ENCODE measurements at regions of chr9 and their contacts with region 1.

Region 1: DNA sequence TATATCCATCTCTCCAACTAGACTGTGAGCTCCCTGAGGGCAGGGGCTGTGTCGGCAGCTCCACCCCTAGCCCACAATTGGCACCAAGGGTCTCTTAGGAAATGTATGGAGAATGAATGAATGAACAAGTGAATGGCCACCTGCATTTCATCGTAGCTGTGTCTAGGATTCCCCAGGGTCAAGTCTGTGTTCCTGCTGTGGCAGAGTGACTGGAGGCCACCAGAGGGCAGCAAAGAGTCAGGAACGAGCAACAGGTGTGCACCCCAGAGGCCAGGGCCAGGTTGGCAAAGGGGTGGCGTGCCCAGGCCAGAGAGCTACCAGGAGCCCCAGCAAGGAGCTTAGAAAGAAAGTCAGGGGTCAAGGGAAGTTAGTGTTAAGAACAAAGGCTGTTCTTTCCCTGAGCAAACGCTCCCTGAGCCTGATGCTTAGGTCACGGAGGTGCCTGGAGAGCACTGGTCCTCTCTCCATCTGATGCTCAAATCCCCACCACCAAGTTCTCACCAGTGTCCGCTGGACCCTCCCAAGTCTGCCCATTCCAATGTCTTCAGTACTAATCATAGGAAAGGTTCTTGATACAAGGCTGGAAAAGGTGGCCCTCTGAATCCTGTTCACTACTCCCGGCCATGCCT is 160.7 kb downstream of the PAX5 start:
- DNase-seq: peak; percentile 79
- ATAC-seq: peak; percentile 90
- H3K4me3 Mint-ChIP-seq: no peak overlapping the region
- H3K27ac Mint-ChIP-seq: no peak overlapping the region
- H3K4me1 Mint-ChIP-seq: no peaks in the 10 kb centered on the region
- H3K27me3 Mint-ChIP-seq: peaks cover 14% of the 10 kb centered on the region

Region 2: DNA sequence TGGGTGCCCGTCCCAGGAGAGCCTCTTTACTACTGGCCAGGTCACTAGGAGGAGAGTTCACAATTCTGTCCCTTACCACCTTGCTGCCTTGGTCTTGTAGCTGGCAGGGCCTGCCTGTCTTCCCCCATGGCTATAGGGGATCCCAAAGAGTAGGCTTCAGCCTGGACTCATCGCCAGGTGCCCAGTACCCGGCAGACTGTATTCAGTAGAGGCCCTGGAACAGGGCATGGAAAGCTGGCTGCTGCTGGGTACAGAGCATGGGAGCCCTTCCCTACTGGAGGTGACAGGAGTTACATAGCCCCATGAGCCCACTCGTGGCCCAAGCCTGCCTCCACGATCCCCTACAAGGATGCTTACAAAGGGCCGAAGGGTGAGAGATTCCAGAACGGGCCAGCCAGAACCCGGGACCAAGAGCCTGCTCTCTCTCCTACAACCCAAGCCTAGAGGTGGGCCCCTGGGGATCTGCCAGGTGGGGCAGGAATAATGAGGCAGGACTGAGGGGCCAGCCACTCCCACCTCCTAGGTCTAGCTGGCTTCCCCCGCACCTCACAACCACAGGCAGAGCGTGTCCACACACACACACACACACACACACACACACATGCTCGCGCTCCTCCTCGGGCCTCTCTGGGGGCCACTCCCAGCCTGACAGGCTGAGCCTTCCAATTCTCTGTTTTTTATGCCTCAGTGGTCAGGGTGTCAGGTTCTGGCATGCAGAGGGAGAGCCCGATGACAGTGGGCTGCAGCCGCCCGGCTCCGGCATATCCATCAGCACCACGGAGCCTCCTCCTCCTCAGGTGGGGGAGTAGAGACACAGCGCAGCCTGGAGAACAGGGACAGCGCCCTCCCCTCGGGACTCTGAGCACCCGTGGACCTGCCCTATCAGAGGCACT is 25.3 kb before region 1 on chr9:
- CTCF ChIA-PET with region 1: no interaction called
- POLR2A ChIA-PET with region 1: no interaction called
- DNase-seq: no peak
- ATAC-seq: no peak
- H3K4me3 Mint-ChIP-seq: no peak overlapping the region
- H3K27ac Mint-ChIP-seq: no peak overlapping the region
- H3K4me1 Mint-ChIP-seq: no peaks in the 10 kb centered on the region
- H3K27me3 Mint-ChIP-seq: no peaks in the 10 kb centered on the region

Region 3: DNA sequence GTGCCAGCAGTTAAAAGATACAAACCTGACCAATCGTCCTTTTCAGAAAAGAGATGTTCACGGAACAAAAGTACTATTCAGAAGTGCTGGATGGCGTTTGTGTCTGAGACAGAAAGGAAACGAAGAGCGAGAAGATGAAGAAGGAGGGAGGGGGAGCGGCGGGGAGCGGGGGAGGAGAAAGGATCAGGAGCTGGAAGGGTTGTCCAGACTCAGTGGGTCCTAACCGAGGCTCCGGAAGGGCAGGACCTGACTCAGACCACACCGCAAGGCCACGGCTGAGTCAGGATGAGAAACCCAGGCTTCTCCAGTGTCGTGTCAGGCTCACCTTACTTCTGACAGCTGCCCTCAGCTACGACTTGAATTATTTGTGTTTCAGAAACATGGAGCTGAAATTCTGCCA is 114.5 kb after region 1 on chr9:
- CTCF ChIA-PET with region 1: interaction called, 22 read pairs
- POLR2A ChIA-PET with region 1: no interaction called
- DNase-seq: no peak
- ATAC-seq: no peak
- H3K4me3 Mint-ChIP-seq: no peak overlapping the region
- H3K27ac Mint-ChIP-seq: no peak overlapping the region
- H3K4me1 Mint-ChIP-seq: peaks cover 15% of the 10 kb centered on the region
- H3K27me3 Mint-ChIP-seq: peaks cover 68% of the 10 kb centered on the region

Region 4: DNA sequence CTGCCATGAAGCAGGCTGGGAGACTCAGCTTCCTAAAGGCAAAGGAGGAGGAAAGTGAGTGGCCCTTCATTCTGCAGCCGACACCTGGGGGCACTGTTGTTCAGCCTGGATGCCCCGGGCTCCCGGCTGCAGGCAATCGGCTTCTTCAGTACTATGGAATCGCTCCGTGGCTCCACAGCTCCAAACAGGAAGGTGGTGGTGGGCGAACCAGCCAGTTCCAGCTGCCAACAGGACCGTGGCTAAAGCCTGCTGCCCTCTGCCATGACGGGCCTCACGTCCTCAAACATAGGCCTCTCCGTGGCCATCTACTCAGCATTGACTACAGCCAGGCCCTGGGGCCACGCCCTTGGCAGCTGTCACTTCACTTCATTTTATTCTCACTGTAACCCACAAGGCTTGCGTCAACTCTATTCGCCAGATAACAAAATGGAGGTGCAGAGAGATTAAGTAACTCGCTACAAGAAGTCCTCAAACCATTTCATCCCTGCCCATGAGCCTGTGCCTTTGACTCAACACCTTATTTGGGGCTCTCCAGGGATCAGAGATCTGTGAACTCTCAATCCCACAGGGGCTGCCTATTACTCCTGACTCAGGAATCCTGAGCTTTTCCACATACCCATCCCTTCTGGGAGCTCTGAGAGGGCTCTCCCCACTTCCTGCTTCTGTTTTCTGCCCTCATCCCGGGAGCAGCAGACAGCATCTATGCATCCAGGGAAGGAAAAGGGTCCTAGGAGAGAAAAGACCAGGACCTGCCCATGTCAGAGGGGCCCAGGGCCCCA is 122.8 kb after region 1 on chr9:
- CTCF ChIA-PET with region 1: interaction called, 27 read pairs
- POLR2A ChIA-PET with region 1: no interaction called
- DNase-seq: peak; percentile 61
- ATAC-seq: peak; percentile 74
- H3K4me3 Mint-ChIP-seq: peak overlapping the region; percentile 34
- H3K27ac Mint-ChIP-seq: no peak overlapping the region
- H3K4me1 Mint-ChIP-seq: peaks cover 4% of the 10 kb centered on the region
- H3K27me3 Mint-ChIP-seq: peaks cover 24% of the 10 kb centered on the region

Region 5: DNA sequence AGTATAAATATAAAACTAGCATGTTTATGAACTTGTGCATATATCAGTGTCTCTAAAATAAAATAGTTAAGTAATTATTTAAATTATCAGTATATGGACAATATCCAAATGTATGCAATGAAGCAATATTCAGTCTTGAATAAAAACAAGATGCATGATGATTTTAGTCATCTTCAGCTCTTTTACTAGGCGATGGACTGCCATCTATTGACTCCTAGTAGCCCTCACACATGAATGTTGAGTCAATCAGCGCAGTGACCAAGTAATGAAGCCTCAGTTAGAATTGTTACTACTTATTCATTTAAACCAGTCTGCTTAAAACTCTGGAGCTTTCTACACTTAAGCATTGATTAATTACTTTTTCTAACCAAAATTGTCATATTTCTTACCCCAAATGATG is 456.2 kb after region 1 on chr9:
- CTCF ChIA-PET with region 1: interaction called, 13 read pairs
- POLR2A ChIA-PET with region 1: no interaction called
- DNase-seq: peak; percentile 28
- ATAC-seq: no peak
- H3K4me3 Mint-ChIP-seq: no peak overlapping the region
- H3K27ac Mint-ChIP-seq: no peak overlapping the region
- H3K4me1 Mint-ChIP-seq: no peaks in the 10 kb centered on the region
- H3K27me3 Mint-ChIP-seq: no peaks in the 10 kb centered on the region

Measured in activated CD8-positive, alpha-beta T cell treated with anti-CD3 and anti-CD28 coated beads, Interleukin-2, amount 10 ng/mL, durations not matched to agents 7 days and 5 days (primary cell).